OCI-LY7 (cell line): ENCODE measurements at regions of chr15 and their contacts with region 1.

Region 1: DNA sequence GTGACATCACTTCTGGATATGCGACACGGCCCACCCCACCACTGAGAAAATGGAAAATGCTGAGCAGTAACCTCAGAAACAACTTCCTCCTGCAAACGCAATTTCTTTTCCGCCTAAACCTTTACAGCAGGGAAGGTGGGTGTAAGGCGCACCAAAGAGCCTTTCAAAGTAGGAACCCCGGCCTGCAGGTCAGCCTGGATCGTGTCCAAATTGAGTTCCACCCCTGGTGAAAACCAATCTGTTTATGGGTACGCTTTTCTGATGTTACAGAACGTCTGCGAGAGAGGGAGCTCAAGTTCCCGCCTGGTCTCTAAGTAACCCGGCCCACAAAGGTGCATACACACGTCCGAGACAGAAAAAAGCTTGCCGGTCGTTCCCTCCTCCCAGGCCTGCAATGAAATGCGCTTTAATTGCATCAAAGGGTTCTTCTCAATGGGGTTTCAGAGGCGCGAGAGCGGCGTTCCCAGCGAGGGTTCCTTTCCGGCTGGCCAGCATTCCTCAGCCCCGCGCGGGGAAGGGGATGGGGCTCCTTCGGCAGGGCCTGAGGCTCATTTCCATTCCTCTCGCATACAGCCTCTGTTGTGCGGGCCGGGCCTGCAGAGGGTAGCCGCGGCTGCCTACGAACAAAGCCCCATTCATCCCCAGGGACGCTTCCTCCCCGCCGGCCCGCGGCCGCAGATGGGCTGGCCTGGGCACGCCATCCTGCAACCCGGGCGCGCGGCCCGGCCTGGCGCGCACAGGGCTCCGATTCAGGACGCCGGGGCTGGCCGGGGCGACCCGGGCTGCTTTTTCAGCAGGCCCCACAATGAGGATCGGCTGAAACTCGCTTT is 138.1 kb downstream of the TMCO5A start:
- DNase-seq: peak; percentile 92
- H3K4me3 ChIP-seq: peak overlapping the region; percentile 70
- H3K27ac ChIP-seq: peak overlapping the region; percentile 97
- H3K4me1 ChIP-seq: peaks cover 86% of the 10 kb centered on the region
- CTCF ChIP-seq: peak; percentile 71

Region 2: DNA sequence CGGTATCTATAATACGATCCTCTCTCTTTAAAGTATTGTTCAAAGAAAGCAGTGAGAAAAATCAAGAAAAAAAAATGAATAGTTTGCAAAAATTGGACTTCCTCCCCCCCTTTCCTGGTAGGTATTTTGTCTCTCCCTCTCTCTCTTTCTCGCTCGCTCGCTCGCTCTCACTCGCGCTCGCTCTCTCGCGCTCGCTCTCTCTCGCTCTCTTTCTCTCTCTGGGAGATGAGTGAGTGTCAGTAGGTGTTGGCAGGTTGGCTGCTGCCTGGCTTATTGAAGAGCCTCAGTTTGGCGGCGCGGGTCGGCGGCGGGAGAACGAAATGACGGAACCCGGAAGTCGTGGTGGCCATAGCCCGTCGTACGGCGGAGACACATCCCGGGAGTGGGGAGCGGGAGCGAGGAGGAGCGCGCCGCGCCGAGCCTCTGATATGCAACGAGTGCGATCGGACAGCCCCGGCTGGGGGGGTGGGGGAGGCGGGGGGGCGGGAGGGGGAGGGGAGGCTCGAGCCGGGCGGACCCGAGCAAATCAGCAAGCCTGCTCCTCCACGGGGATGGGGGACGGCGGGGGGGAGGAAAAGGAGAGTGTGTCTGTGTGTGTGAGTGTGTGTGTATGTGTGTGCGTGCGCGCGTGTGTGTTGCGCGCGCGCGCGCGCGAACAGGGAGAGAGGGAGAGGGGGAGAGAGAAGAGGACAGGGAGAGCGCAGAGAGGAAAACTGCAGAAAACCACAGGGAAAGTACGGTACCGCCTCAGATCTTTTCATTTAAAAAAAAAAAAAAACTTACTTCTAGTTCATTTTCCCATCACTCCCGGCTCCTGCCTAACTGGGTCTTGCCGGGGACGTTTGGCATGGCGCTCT is 972.2 kb before region 1 on chr15 and contains the start of gene MEIS2:
- CTCF ChIA-PET with region 1: no interaction called
- POLR2A ChIA-PET with region 1: no interaction called
- intact Hi-C with region 1: loop called (anchors 5 kb)
- DNase-seq: peak; percentile 89
- H3K4me3 ChIP-seq: peak within 1 kb of the TSS; percentile 87
- H3K27ac ChIP-seq: peak within 1 kb of the TSS; percentile 96
- H3K4me1 ChIP-seq: peaks cover 21% of the 10 kb centered on the region
- CTCF ChIP-seq: no peak
- total RNA-seq, gene MEIS2: 31.7 and 35.8 TPM in 2 replicates

Region 3: DNA sequence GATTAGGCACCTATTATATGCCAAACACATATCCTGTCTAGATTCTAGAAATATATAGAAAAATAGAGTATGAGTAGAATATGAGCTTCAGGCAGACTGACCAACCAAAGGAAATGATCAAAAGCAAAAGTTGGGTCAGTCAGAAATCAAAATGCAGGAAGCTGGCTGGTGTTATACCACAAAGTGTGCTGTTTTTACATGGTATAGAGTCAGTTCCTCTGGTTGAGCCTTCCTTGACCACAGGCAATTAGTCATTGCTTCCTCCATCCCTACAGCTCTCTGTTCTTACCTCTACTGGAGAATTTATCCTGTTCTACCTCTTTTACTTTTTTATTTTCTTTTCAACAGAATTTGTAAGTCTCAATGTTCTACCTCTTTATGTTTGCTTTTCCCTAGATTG is 11.7 kb after region 1 on chr15:
- CTCF ChIA-PET with region 1: interaction called, 3 read pairs
- POLR2A ChIA-PET with region 1: interaction called, 29 read pairs
- intact Hi-C with region 1: no loop called
- DNase-seq: peak; percentile 51
- H3K4me3 ChIP-seq: peak overlapping the region; percentile 32
- H3K27ac ChIP-seq: peak overlapping the region; percentile 8
- H3K4me1 ChIP-seq: peaks cover 50% of the 10 kb centered on the region
- CTCF ChIP-seq: no peak

Region 4: DNA sequence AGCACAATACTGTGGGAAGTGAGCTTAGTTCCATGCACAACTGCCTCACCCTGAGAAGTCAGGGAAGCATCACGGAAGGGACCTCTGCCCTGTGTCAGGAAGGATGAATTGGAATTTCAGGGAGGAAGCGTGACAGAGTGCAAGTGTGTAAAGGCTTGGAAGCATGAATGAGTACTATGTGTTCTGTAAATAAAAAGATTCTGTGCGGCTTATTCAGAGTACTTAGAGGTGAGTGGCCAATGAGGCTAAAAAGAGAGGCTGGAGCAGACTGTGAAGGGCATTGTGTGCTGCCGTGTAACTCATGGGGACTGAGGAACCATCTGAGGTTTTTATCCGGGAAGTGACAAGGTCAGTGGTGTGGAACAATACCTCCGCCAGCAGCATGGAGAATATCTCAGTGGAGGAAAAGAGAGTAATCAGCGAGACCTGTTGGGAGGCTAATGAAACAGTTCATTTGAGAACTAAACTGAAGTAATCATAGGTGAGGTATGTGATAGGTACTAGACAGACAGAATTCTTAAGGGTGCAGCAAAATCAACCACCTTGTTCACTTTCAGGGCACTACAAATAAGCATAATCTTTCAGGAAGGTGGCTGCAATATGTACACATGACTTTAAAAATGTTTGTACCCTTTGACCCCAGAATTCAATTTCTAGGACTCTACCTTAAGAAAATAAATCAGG is 115.2 kb after region 1 on chr15:
- CTCF ChIA-PET with region 1: no interaction called
- POLR2A ChIA-PET with region 1: interaction called, 11 read pairs
- intact Hi-C with region 1: loop called (anchors 1 kb)
- DNase-seq: no peak
- H3K4me3 ChIP-seq: no peak overlapping the region
- H3K27ac ChIP-seq: no peak overlapping the region
- H3K4me1 ChIP-seq: peaks cover 75% of the 10 kb centered on the region
- CTCF ChIP-seq: no peak

Region 5: GRCh38 chr15:38217788-38218609 is 145.4 kb after region 1 on chr15:
- CTCF ChIA-PET with region 1: no interaction called
- POLR2A ChIA-PET with region 1: interaction called, 14 read pairs
- intact Hi-C with region 1: no loop called
- DNase-seq: no peak
- H3K4me3 ChIP-seq: no peak overlapping the region
- H3K27ac ChIP-seq: no peak overlapping the region
- H3K4me1 ChIP-seq: peaks cover 16% of the 10 kb centered on the region
- CTCF ChIP-seq: no peak

Region 6: GRCh38 chr15:38247336-38247735 is 174.8 kb after region 1 on chr15:
- CTCF ChIA-PET with region 1: interaction called, 3 read pairs
- POLR2A ChIA-PET with region 1: interaction called, 16 read pairs
- intact Hi-C with region 1: loop called (anchors 1 kb)
- DNase-seq: no peak
- H3K4me3 ChIP-seq: no peak overlapping the region
- H3K27ac ChIP-seq: no peak overlapping the region
- H3K4me1 ChIP-seq: peaks cover 24% of the 10 kb centered on the region
- CTCF ChIP-seq: no peak

Region 7: DNA sequence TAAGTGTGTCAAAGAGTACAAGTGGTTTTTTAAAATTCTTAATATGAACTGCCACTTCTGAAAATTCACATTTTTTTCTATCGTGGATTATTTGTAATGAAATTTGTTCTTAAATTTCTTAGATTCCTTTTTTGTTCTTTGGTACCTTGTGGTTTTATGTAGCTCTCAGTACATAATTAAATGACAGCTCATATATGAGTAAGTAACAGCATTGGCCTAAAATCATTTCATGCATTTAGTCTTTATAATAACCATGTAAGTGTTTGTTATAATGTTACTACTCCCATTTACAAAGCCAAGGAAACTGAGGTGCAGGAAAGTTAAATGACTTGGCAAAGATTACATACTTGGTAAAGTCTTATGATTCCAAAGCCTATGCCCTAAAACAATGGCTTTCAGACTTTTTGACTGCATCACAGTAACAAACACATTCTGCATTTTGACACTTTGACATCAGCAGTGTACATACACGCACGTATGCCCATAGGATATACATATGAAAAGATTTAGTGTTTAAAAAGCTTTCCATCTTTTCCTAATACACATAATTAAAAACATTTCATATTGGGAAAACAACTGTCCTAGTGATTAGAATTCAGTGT is 195.0 kb after region 1 on chr15:
- CTCF ChIA-PET with region 1: no interaction called
- POLR2A ChIA-PET with region 1: no interaction called
- intact Hi-C with region 1: no loop called
- DNase-seq: no peak
- H3K4me3 ChIP-seq: no peak overlapping the region
- H3K27ac ChIP-seq: no peak overlapping the region
- H3K4me1 ChIP-seq: no peaks in the 10 kb centered on the region
- CTCF ChIP-seq: no peak

Region 8: DNA sequence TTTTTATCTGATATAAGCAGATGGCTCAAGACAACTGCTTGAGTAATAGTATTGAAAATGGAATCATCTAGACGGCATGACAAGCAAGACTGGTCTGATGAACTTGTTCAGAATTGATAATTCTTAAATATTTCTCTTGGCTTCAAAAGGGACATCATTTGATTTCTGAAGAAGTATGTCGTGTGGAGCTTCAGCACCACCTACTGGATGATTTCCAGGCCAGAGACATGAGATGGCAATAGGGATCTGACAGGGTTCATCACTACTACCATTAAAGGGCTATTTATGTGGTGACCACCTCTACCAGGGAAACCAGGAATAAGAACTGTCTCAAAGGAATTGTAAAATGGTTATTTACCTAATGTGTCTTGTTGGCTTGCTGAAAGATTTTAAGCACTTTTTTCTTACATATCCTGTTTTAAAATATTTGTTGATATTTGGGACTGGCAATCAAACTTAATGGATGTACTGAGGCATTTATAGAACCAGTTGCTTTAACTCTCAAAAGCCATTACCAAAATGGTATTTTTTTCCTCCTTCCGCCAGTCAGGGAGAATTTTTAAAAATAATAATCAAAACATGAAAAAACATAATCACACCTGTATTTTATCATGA is 281.9 kb after region 1 on chr15:
- CTCF ChIA-PET with region 1: no interaction called
- POLR2A ChIA-PET with region 1: no interaction called
- intact Hi-C with region 1: loop called (anchors 1 kb)
- DNase-seq: peak; percentile 74
- H3K4me3 ChIP-seq: no peak overlapping the region
- H3K27ac ChIP-seq: no peak overlapping the region
- H3K4me1 ChIP-seq: no peaks in the 10 kb centered on the region
- CTCF ChIP-seq: peak; percentile 95